ENCODE measurements at regions of chr5 and their contacts with region 1.

Region 1: GRCh38 chr5:148482691-148483462 is 99.1 kb downstream of the FBXO38 start:
- DNase-seq: peak; percentile 44
- ATAC-seq: peak; percentile 98
- H3K4me3 ChIP-seq: no peak overlapping the region
- H3K27ac ChIP-seq: no peak overlapping the region
- H3K4me1 ChIP-seq: 0 out of 4 replicates have a peak, but pooled peaks cover 0 to 4% of the 10 kb centered on the region in 2 experiments
- H3K27me3 ChIP-seq: peaks cover 22% of the 10 kb centered on the region
- CTCF ChIP-seq: peak; percentile 62 to 88 (median 86)
- POLR2A ChIP-seq: no peak
- RAD21 ChIP-seq: peak; percentile 50

Region 2: DNA sequence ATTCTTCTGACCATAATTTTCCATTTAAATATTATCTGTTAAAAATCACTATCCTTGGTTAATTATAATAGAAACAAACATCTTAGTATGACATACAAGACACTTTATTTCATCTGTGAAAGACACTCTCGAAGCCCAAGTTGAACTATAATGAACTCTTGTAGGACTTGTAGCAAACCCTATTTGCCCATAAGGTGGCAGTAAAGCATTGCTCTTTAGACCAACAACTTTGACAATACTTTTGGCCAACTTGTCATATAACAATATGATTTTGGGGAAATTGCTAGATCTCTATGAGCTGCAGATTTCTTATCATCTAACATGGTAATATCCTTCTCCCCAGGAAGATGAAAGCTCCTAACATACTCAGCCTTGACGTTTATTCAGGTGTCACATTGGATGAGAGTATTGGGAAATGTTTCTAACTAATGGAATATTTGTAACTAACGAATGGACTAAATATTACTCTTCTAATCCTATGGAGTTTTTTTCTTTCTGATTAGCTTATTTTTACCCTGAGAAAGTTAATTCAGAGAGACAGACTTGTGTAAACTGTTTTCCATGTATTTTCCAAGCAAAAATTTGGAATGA is 303.5 kb before region 1 on chr5:
- CTCF ChIA-PET with region 1: no interaction called
- POLR2A ChIA-PET with region 1: no interaction called
- RAD21 ChIA-PET with region 1: no interaction called
- intact Hi-C with region 1: loop called (anchors 5 kb)
- DNase-seq: peak; percentile 48
- ATAC-seq: peak; percentile 78
- H3K4me3 ChIP-seq: no peak overlapping the region
- H3K27ac ChIP-seq: no peak overlapping the region
- H3K4me1 ChIP-seq: no peaks in the 10 kb centered on the region
- H3K27me3 ChIP-seq: no peaks in the 10 kb centered on the region
- CTCF ChIP-seq: peak; percentile 62 to 76 (median 72)
- POLR2A ChIP-seq: no peak
- RAD21 ChIP-seq: peak; percentile 84

Region 3: GRCh38 chr5:148290271-148291195 is 192.3 kb before region 1 on chr5:
- CTCF ChIA-PET with region 1: no interaction called
- POLR2A ChIA-PET with region 1: no interaction called
- RAD21 ChIA-PET with region 1: no interaction called
- intact Hi-C with region 1: loop called (anchors 5 kb)
- DNase-seq: peak; percentile 4
- ATAC-seq: peak; percentile 80
- H3K4me3 ChIP-seq: no peak overlapping the region
- H3K27ac ChIP-seq: no peak overlapping the region
- H3K4me1 ChIP-seq: no peaks in the 10 kb centered on the region
- H3K27me3 ChIP-seq: peaks cover 20% of the 10 kb centered on the region; the same call in 1 of the 2 replicates
- CTCF ChIP-seq: peak; percentile 39 to 57 (median 49); a peak in 5 of 6 replicates
- POLR2A ChIP-seq: no peak
- RAD21 ChIP-seq: peak; percentile 67

Region 4: GRCh38 chr5:148541054-148541835 is 58.4 kb after region 1 on chr5:
- CTCF ChIA-PET with region 1: no interaction called
- POLR2A ChIA-PET with region 1: no interaction called
- RAD21 ChIA-PET with region 1: no interaction called
- intact Hi-C with region 1: no loop called
- DNase-seq: no peak
- ATAC-seq: no peak
- H3K4me3 ChIP-seq: no peak overlapping the region
- H3K27ac ChIP-seq: no peak overlapping the region
- H3K4me1 ChIP-seq: no peaks in the 10 kb centered on the region
- H3K27me3 ChIP-seq: peaks cover 38% of the 10 kb centered on the region
- CTCF ChIP-seq: no peak
- POLR2A ChIP-seq: no peak
- RAD21 ChIP-seq: no peak

Measured in HCT116 (cell line).